Ascending aorta (tissue), 2 donors: ENCODE measurements at regions of chr20 and their contacts with region 1.

Region 1: DNA sequence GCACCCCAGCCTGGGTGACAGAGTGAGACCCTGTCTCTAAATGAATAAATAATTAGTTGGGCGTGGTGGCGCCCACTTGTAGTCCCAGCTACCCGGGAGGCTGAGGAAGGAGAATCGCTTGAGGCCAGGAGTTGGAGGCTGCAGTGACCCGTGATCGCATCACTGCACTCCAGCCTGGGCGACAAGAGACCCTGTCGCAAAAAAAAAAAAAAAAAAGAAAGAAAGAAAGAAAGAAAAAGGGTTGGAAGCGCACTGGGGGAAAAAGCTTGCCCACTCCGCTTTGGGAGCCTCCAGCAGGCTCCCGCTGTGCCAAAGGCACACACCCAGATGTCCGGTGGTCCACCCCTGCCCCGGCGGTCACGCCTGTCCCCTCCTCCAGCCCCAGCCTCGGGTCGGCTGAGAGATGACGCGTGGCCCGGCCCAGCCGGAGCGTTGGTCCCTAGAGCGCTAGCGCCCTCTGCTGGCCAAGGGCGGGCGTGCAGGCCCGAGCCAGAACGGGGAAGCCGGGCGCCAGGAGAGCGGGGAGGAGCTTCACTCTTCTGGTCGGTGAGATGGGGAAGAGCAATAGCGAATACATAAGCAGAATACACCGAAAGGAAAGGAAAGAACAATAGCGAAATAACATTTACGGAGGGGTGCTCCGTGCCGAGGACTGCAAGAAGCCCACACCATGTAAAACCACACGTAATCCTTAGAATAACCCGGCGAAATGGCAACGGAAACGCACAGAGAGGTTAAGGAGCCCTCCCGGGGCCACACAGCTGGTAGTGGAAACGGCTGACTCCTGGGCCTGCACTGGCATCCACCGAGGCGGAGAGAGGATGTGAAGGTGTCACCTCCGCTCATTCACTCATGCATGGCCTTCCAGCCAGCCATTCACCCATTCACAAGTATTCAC is 41.7 kb downstream of the UBE2V1 start:
- DNase-seq: peak; percentile 23 to 93
- H3K4me3 ChIP-seq: peak overlapping the region; percentile 32 to 57
- H3K27ac ChIP-seq: no peak overlapping the region
- H3K4me1 ChIP-seq: peaks cover 0 to 3% of the 10 kb centered on the region in 2 donors
- H3K27me3 ChIP-seq: no peaks in the 10 kb centered on the region
- CTCF ChIP-seq: peak; percentile 100

Region 2: GRCh38 chr20:48718857-48719578 is 1352.2 kb before region 1 on chr20:
- intact Hi-C with region 1: no loop called
- DNase-seq: no peak
- H3K4me3 ChIP-seq: no peak overlapping the region
- H3K27ac ChIP-seq: peak overlapping the region; percentile 90 to 97
- H3K4me1 ChIP-seq: peaks cover 21 to 44% of the 10 kb centered on the region in 2 donors
- H3K27me3 ChIP-seq: no peaks in the 10 kb centered on the region
- CTCF ChIP-seq: no peak

Region 3: GRCh38 chr20:49915378-49916145 is 155.7 kb before region 1 on chr20 and contains the start of gene SPATA2:
- intact Hi-C with region 1: no loop called
- DNase-seq: peak; percentile 89 to 99
- H3K4me3 ChIP-seq: peak within 1 kb of the TSS; percentile 83 to 88
- H3K27ac ChIP-seq: peak within 1 kb of the TSS; percentile 95 to 100
- H3K4me1 ChIP-seq: peaks cover 7 to 18% of the 10 kb centered on the region in 2 donors
- H3K27me3 ChIP-seq: no peaks in the 10 kb centered on the region
- CTCF ChIP-seq: no peak
- total RNA-seq, gene SPATA2: 7.6 TPM

Region 4: DNA sequence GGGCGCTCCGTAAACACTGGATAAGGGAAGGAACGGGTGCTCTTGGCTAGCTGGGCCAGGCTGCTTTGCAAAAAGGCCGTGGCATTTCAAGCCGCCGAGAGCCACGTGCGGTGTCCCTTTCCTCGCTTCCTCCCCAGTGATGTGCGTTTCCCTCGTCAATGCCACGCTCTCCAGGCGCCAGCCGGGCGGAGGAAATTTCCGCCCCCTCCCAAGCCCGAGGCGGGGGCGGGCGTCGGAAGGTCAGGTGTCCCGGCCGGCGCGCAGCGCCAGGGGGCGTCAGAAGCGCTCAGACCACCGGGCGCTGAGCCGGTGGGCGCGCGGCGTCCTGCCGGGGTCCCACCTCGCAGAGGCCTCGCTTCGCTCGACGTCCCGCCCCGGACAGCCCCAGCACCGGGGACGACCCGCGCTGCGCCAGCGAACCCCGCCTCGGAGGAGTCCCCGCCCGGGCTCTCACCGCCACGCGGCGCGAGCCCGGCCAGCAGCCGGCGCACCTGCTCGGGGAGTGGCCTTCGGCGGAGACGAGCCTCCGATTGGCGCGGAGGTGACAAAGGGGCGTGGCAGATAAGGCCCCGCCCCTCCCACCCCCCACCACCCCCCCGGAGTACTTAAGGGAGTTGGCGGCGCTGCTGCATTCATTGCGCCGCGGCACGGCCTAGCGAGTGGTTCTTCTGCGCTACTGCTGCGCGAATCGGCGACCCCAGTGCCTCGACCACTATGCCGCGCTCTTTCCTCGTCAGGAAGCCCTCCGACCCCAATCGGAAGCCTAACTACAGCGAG is 88.7 kb before region 1 on chr20 and contains the start of gene SNAI1:
- intact Hi-C with region 1: loop called (anchors 1 kb)
- DNase-seq: peak in 1 of 2 donors; percentile 84
- H3K4me3 ChIP-seq: peak within 1 kb of the TSS; percentile 66 to 80
- H3K27ac ChIP-seq: peak within 1 kb of the TSS; percentile 69 to 71
- H3K4me1 ChIP-seq: peaks cover 12 to 37% of the 10 kb centered on the region in 2 donors
- H3K27me3 ChIP-seq: no peaks in the 10 kb centered on the region
- CTCF ChIP-seq: peak; percentile 35 to 84 (median 62)
- total RNA-seq, gene SNAI1: 64.4 TPM

Region 5: DNA sequence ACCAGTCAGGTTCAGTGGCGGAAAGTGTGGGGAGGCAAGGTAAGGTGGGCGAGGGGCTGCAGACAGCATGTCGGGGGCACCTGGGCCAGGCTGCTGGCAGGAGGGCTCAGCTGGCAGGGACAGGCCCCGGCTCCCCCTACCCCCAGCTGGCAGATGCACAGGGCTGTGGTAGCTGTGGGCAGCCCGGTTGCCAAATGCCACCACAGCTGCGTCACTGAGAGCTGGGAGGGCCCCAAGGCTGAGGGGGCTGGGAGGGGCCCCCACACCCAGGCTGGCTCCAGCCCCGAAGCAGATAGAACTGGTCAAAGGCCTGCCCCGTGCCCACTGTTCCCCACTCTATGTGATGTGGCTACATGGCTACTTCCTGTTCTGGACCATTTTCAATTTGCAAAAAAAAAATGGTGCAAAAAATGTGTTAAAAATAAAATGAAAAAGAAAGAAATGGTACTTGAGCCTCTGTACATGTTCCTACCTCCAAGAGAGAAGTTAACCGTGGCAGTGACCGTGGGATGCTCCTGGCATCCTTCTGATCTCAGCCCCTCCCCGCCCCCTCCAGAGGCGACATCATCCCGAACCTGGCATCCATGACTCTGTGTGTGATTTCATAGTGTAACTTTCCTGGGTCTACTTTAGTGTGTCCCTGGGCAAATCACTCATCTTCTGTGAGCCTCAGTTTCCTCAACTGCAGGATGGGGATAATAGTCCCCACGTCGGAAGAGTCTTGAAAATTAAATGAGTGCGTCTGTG is 22.6 kb before region 1 on chr20:
- intact Hi-C with region 1: loop called (anchors 2 kb)
- DNase-seq: peak; percentile 27 to 79
- H3K4me3 ChIP-seq: peak overlapping the region in 1 of 2 donors; percentile 16
- H3K27ac ChIP-seq: peak overlapping the region; percentile 44 to 79
- H3K4me1 ChIP-seq: peaks cover 6 to 8% of the 10 kb centered on the region in 2 donors
- H3K27me3 ChIP-seq: no peaks in the 10 kb centered on the region
- CTCF ChIP-seq: no peak